ENCODE measurements at regions of chr9 and their contacts with region 1.

Region 1: GRCh38 chr9:136902259-136902821 is 16.0 kb downstream of the TRAF2 start:
- DNase-seq: no peak
- ATAC-seq: peak; percentile 84
- H3K4me3 ChIP-seq: 0 out of 4 replicates have a peak overlapping the region, but pooled peaks of 1 of the 2 experiments have one; percentile 19
- H3K27ac ChIP-seq: peak overlapping the region; percentile 97
- H3K4me1 ChIP-seq: peaks cover 49% of the 10 kb centered on the region
- H3K27me3 ChIP-seq: no peaks in the 10 kb centered on the region
- CTCF ChIP-seq: no peak

Region 2: DNA sequence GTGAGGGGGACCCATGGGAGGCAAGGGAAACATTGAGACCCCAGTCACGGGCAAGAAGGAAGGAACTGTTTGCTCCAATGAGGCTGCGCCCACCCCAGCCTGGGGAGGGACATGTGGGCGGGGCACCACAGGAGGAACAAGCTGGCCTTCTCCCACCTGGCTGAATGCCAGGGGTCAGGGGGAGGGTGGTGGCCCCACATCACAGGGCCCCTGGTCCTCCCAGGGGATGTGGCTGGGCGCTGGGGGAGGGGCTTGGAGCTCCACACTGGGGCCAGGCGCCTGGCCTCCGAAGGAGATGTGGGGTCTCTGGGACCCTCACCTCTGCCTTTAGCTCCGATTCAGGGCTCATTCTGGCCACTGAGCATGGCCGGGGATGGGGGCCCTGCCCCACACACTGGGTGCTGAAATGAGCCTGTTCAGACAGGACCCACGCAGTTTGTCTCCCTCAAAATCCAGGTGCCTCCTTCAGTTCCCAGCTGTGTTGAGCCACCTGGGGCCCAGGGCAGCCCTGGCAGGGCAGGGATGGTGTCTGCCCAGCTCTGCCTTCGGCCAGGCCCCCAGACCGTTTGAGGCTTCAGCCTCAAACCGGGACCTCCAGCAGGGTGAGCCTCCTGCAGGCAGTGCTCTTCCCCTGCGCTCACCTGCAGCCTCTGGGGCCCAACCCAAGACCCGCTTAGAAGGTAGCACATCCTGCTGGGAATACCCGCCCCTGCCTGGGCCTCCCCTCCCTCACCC is 323.3 kb before region 1 on chr9:
- CTCF ChIA-PET with region 1: no interaction called
- POLR2A ChIA-PET with region 1: no interaction called
- in situ Hi-C with region 1: no loop called
- intact Hi-C with region 1: no loop called
- DNase-seq: no peak
- ATAC-seq: peak; percentile 82
- H3K4me3 ChIP-seq: no peak overlapping the region
- H3K27ac ChIP-seq: no peak overlapping the region
- H3K4me1 ChIP-seq: peaks cover 10% of the 10 kb centered on the region
- H3K27me3 ChIP-seq: no peaks in the 10 kb centered on the region
- CTCF ChIP-seq: no peak

Region 3: GRCh38 chr9:136923881-136924280 is 21.5 kb after region 1 on chr9:
- CTCF ChIA-PET with region 1: interaction called, 5 read pairs
- POLR2A ChIA-PET with region 1: interaction called, 10 read pairs
- in situ Hi-C with region 1: no loop called
- intact Hi-C with region 1: no loop called
- DNase-seq: no peak
- ATAC-seq: no peak
- H3K4me3 ChIP-seq: no peak overlapping the region
- H3K27ac ChIP-seq: no peak overlapping the region
- H3K4me1 ChIP-seq: no peaks in the 10 kb centered on the region
- H3K27me3 ChIP-seq: no peaks in the 10 kb centered on the region
- CTCF ChIP-seq: no peak

Region 4: GRCh38 chr9:136991993-136992818 is 89.9 kb after region 1 on chr9 and contains the start of gene PAXX:
- CTCF ChIA-PET with region 1: no interaction called
- POLR2A ChIA-PET with region 1: interaction called, 13 read pairs
- in situ Hi-C with region 1: no loop called
- intact Hi-C with region 1: no loop called
- DNase-seq: no peak
- ATAC-seq: peak; percentile 87
- H3K4me3 ChIP-seq: peak within 1 kb of the TSS; percentile 68 to 78
- H3K27ac ChIP-seq: peak within 1 kb of the TSS; percentile 77
- H3K4me1 ChIP-seq: peaks cover 17% of the 10 kb centered on the region
- H3K27me3 ChIP-seq: no peaks in the 10 kb centered on the region
- CTCF ChIP-seq: no peak
- total RNA-seq, gene PAXX: 64.0 TPM